Ascending aorta (tissue), 2 donors: ENCODE measurements at regions of chr1 and their contacts with region 1.

Region 1: DNA sequence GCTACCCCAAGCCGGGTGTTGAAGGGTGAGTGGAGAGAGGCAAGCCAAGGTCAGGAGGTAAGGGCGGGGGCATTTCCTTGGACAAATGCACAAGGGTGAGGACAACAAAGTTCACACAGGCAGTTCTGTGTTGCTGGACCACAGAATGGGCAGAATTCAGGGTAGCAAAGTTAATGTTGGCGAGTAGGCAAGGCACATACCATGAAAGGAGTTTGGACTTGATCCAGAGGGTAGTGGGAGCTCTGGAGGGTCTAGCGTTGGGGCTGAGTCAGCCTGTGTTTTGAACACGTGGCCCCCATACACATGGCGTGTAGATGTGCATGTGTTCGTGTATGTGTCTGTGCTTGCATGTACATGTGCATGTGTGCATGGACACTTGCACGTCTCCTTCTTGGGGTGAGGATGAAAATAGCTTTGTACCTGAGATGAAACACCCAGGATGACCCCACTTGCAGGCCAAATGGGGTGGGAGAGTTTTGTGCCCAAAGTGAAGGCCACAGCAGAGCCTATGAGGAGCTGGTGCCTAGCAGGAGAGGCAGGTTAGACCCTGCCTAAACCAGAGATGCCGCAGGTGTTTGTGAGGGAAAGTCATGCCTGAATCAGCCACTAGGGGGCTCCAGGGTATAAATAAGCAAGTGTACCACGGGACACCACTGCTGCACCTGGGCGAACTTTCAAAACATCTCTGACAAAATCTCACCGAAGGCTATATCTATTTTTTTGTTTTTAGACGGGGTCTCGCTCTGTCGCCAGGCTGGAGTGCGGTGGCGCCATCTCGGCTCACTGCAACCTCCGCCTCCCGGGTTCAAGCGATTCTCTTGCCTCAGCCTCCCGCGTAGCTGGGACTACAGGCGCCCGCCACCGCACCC is 21.8 kb downstream of the SLC27A3 start:
- DNase-seq: peak in 1 of 2 donors; percentile 89
- H3K4me3 ChIP-seq: no peak overlapping the region
- H3K27ac ChIP-seq: no peak overlapping the region
- H3K4me1 ChIP-seq: no peaks in the 10 kb centered on the region
- H3K27me3 ChIP-seq: no peaks in the 10 kb centered on the region
- CTCF ChIP-seq: peak; percentile 88 to 92 (median 90)

Region 2: DNA sequence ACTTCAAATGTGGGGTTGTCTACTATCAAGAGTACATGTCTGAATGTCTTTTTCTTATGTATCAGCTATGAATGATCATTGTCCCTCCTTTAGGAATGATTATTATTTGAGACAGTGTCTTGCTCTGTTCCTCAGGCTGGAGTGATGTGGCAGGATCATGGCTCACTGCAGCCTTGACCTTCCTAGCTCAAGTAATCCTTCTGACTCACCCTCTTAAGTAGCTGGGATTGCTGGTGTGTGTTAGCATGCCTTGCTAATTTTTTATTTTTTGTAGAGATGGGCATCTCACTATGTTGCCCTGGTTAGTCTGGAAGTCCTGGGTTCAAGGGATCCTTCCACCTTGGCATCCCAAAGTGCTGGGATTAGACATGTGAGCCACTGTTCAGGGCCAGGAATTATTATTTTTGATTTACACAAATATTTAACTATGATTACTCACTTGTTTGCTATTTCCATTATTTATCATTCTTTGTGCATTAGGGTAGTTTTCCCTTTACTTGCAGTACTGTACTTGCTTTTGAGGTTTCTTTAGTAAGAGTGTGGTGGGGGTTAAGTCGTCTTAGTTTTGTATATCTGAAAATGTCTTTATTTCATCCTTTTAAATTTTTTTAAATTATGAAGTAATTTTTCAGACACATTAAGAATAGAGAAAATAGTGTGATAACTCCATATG is 349.4 kb before region 1 on chr1:
- intact Hi-C with region 1: no loop called
- DNase-seq: no peak
- H3K4me3 ChIP-seq: no peak overlapping the region
- H3K27ac ChIP-seq: no peak overlapping the region
- H3K4me1 ChIP-seq: no peaks in the 10 kb centered on the region
- H3K27me3 ChIP-seq: no peaks in the 10 kb centered on the region
- CTCF ChIP-seq: no peak

Region 3: GRCh38 chr1:154157520-154158306 is 360.7 kb after region 1 on chr1:
- intact Hi-C with region 1: loop called (anchors 10 kb)
- DNase-seq: no peak
- H3K4me3 ChIP-seq: no peak overlapping the region
- H3K27ac ChIP-seq: peak overlapping the region; percentile 88 to 94
- H3K4me1 ChIP-seq: peaks cover 0 to 23% of the 10 kb centered on the region in 2 donors
- H3K27me3 ChIP-seq: no peaks in the 10 kb centered on the region
- CTCF ChIP-seq: no peak